Left ventricle myocardium superior (tissue), 1 donor: ENCODE measurements at regions of chr1 and their contacts with region 1.

Region 1: GRCh38 chr1:207404849-207405525 is 49.1 kb upstream of the CR2 start:
- DNase-seq: no peak
- ATAC-seq: peak; percentile 57

Region 2: DNA sequence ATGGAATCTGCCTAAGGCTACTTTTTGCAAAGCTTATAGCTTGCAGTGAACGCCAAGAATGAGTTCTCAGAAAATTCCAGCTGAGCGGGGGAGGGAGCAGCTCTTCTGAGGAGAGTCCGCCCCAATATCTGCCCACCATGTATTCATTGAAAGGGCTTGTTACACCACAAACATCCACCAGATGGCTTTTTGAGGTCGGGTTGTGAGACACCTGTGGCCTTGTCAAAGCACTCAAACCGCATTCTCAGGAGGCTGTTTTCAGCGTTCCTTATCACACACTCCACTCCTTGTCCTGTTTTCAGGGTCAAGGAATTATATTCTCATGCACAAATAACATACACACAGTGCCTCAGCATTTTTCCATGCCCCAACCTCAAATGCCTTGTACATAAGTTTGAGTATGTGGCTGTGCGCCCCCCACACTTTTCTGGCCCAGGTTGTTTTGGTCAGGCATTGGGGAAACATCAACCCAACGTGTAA is 320.2 kb before region 1 on chr1:
- intact Hi-C with region 1: loop called (anchors 5 kb)
- DNase-seq: no peak
- ATAC-seq: peak; percentile 63

Region 3: DNA sequence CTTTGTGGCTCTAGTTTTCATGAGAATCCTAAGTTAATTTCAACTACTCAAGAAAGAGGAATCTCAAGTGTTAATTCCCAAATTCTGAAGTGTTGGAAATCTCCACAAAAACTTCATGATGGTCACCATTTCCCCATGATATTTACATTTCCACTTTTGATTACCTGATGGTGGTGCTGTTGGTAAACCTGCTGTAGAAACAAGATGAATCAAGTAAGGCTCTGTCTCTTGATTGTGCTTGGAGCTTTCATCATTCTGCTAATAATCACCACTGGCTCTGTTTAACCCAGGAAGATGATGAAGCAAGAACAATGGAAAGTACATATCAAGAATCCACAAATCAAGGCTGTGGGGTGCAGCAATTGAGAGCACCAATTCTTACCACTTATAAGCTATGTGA is 223.1 kb before region 1 on chr1:
- intact Hi-C with region 1: loop called (anchors 10 kb)
- DNase-seq: no peak
- ATAC-seq: no peak

Region 4: DNA sequence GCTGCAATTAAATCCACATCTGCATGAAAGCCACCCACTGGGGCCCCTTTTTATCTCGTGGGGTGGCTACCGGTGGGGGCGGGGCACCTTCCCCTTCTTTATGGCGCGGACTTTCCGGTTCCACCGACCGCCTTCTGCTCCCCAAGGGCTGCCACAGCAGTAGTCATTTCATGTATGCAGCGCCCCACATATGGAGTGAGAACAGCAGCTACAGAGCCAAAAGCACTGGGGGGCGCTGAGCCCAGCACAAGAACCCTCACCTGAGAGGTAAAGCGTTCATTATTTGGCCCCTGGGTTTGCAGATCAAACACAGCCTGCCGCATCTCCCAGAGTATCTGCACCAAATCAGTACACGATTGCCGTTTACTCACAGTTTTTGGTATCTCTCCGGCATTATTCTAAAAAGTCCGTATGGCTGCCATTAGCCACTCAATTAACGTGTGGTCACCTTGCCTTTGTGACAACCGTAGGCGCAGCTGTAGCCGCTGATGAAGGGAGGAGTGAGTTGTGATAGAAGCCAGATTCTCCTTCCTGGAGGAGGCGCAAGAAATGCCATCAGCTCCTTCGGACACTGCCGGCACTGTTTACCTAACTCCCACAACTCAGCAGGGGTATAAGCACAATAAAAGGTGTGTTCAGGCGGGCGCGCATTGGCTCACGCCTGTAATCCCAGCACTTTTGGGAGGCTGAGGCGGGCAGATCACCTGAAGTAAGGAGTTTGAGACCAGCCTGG is 18.7 kb after region 1 on chr1:
- intact Hi-C with region 1: no loop called
- DNase-seq: no peak
- ATAC-seq: no peak